Activated naive CD4-positive, alpha-beta T cell treated with anti-CD3 and anti-CD28 coated beads for 36 hours (primary cell): ENCODE measurements at regions of chr19 and their contacts with region 1.

Region 1: GRCh38 chr19:11242864-11243797 is 3.7 kb downstream of the ANGPTL8 start:
- DNase-seq: peak; percentile 90
- H3K4me3 Mint-ChIP-seq: no peak overlapping the region
- H3K27ac Mint-ChIP-seq: no peak overlapping the region
- H3K4me1 Mint-ChIP-seq: peaks cover 5% of the 10 kb centered on the region
- H3K27me3 Mint-ChIP-seq: peaks cover 9% of the 10 kb centered on the region

Region 2: GRCh38 chr19:11197264-11198174 is 45.6 kb before region 1 on chr19 and contains the start of gene KANK2:
- CTCF ChIA-PET with region 1: no interaction called
- intact Hi-C with region 1: loop called (anchors 5 kb)
- DNase-seq: peak; percentile 73
- H3K4me3 Mint-ChIP-seq: peak within 1 kb of the TSS; percentile 66
- H3K27ac Mint-ChIP-seq: no peak within 1 kb of the TSS
- H3K4me1 Mint-ChIP-seq: peaks cover 6% of the 10 kb centered on the region
- H3K27me3 Mint-ChIP-seq: peaks cover 12% of the 10 kb centered on the region
- total RNA-seq, gene KANK2: 1.5 to 2.0 TPM

Region 3: DNA sequence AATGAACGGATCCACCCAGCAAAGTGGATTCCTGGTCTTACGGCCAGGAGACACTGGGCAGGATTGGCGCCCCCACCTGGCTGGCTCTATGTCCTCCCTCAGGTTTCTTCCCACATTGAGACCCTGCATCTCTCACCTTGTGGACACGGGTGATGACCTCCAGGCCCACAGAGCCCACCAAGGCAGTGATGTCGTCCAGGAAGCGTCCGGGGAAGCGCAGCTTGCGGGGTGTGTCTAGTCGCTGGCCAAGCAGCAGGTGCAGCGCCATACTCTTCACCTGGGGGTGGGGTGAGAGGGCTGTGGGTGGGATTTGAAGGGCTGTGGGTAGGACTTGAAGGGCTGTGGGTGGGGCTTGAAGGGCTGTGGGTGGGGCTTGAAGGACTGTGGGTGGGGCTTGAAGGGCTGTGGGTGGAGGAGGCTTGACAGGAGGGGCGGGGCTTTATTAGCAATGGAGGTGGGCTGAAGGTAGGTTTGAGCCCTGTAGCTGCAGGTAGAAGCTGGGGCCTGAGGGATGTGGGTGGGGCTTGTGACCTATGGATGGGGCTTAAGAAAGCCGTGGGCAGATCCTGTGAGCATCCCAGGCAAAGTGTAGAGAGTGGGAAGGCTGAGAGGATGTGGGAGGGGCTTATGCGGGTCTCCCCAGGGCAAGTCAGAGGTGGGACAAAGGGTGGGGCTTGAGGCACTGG is 15.8 kb before region 1 on chr19:
- CTCF ChIA-PET with region 1: no interaction called
- intact Hi-C with region 1: no loop called
- DNase-seq: no peak
- H3K4me3 Mint-ChIP-seq: no peak overlapping the region
- H3K27ac Mint-ChIP-seq: no peak overlapping the region
- H3K4me1 Mint-ChIP-seq: no peaks in the 10 kb centered on the region
- H3K27me3 Mint-ChIP-seq: no peaks in the 10 kb centered on the region